CD8-positive, alpha-beta T cell (primary cell): ENCODE measurements at regions of chr9 and their contacts with region 1.

Region 1: DNA sequence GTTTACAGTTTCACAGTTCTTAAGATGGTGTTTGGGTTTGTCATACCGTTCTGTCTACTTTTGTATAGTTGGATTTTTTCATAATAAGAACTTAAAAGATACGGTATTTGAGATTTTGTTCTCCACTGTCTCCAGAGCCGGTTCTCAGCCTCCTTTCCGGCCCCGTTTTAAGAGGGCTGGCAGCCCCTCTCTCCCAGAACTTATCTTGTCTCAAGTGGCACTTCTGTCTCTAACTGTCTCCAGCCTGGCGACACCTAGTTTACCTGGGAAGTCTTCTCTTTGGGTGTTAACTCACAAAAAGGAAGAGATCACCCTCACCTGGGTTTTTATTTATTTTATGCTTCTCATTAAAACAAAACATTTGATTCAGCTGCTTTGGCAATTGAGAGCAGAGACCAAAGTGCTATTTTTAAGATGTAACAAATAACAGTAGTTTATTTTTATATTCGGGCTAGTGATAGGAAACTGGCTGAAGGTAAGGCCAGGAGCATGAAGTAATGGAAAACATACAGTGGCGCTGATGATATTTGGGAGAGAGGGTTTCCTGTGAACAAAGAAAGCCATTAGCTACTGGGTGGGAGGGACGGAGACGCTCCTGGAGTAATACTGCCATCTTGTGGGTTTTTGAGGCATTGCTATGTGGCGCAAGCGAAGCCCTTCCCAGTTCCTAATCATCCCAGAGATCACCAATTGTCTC is 48.3 kb downstream of the ACER2 start:
- DNase-seq: peak; percentile 10 to 81 (median 59)
- ATAC-seq: peak; percentile 96
- H3K4me3 ChIP-seq: no peak overlapping the region
- H3K4me3 Mint-ChIP-seq: peak overlapping the region; percentile 24
- H3K27ac ChIP-seq: no peak overlapping the region
- H3K27ac Mint-ChIP-seq: no peak overlapping the region
- H3K4me1 ChIP-seq: peaks cover 7% of the 10 kb centered on the region
- H3K4me1 Mint-ChIP-seq: peaks cover 5% of the 10 kb centered on the region
- H3K27me3 ChIP-seq: no peaks in the 10 kb centered on the region
- H3K27me3 Mint-ChIP-seq: peaks cover 5% of the 10 kb centered on the region
- CTCF ChIP-seq: peak; percentile 89

Region 2: GRCh38 chr9:18905028-18905882 is 551.9 kb before region 1 on chr9:
- CTCF ChIA-PET with region 1: no interaction called
- POLR2A ChIA-PET with region 1: no interaction called
- intact Hi-C with region 1: no loop called
- DNase-seq: no peak
- ATAC-seq: no peak
- H3K4me3 ChIP-seq: no peak overlapping the region
- H3K4me3 Mint-ChIP-seq: no peak overlapping the region
- H3K27ac ChIP-seq: no peak overlapping the region
- H3K27ac Mint-ChIP-seq: no peak overlapping the region
- H3K4me1 ChIP-seq: no peaks in the 10 kb centered on the region
- H3K4me1 Mint-ChIP-seq: no peaks in the 10 kb centered on the region
- H3K27me3 ChIP-seq: no peaks in the 10 kb centered on the region
- H3K27me3 Mint-ChIP-seq: peaks cover 8% of the 10 kb centered on the region
- CTCF ChIP-seq: no peak

Region 3: GRCh38 chr9:19085295-19085694 is 371.8 kb before region 1 on chr9:
- CTCF ChIA-PET with region 1: interaction called, 4 read pairs
- POLR2A ChIA-PET with region 1: no interaction called
- intact Hi-C with region 1: loop called (anchors 1 to 2 kb)
- DNase-seq: peak in 2 of 9 experiments; percentile 51 to 66
- ATAC-seq: peak; percentile 71
- H3K4me3 ChIP-seq: no peak overlapping the region
- H3K4me3 Mint-ChIP-seq: no peak overlapping the region
- H3K27ac ChIP-seq: no peak overlapping the region
- H3K27ac Mint-ChIP-seq: no peak overlapping the region
- H3K4me1 ChIP-seq: no peaks in the 10 kb centered on the region
- H3K4me1 Mint-ChIP-seq: peaks cover 3% of the 10 kb centered on the region
- H3K27me3 ChIP-seq: no peaks in the 10 kb centered on the region
- H3K27me3 Mint-ChIP-seq: no peaks in the 10 kb centered on the region
- CTCF ChIP-seq: peak; percentile 56

Region 4: DNA sequence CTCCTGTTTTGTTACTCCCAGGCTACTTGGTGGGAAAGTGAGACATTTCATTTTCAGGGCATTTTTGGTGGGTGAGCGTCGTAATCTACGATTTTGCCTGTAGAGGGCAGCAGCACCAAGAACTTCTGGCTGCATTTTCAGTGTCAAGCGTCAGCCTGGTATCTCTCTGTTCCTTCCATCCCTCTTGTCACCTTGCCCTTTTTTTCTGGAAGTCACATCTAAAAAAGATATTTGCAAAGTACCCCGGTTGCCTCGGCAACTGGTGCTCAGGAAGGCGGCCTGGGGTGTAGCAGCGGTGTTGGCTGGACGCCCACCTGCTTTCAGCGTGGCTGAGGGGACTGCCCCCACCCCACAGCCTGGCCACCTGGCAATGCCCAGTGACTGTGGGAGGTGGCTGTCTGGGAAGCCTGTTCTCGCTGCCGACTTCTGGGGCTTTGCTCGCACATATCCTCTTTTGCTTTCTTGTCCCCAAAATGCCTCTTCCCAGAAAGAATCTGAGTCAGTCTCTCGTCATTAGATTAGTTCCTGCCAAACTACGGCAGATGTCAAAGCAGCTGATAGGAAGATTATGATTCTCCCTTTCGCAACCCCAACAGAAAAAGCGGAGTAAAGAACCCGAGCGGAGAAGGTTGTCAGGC is 36.1 kb after region 1 on chr9:
- CTCF ChIA-PET with region 1: no interaction called
- POLR2A ChIA-PET with region 1: no interaction called
- intact Hi-C with region 1: no loop called
- DNase-seq: peak in 6 of 9 experiments; percentile 10 to 60 (median 42)
- ATAC-seq: peak; percentile 63
- H3K4me3 ChIP-seq: no peak overlapping the region
- H3K4me3 Mint-ChIP-seq: peak overlapping the region; percentile 40
- H3K27ac ChIP-seq: no peak overlapping the region
- H3K27ac Mint-ChIP-seq: no peak overlapping the region
- H3K4me1 ChIP-seq: no peaks in the 10 kb centered on the region
- H3K4me1 Mint-ChIP-seq: peaks cover 9% of the 10 kb centered on the region
- H3K27me3 ChIP-seq: no peaks in the 10 kb centered on the region
- H3K27me3 Mint-ChIP-seq: peaks cover 15% of the 10 kb centered on the region
- CTCF ChIP-seq: peak; percentile 76

Region 5: GRCh38 chr9:19513671-19514275 is 56.6 kb after region 1 on chr9:
- CTCF ChIA-PET with region 1: no interaction called
- POLR2A ChIA-PET with region 1: no interaction called
- intact Hi-C with region 1: no loop called
- DNase-seq: no peak
- ATAC-seq: no peak
- H3K4me3 ChIP-seq: no peak overlapping the region
- H3K4me3 Mint-ChIP-seq: no peak overlapping the region
- H3K27ac ChIP-seq: no peak overlapping the region
- H3K27ac Mint-ChIP-seq: no peak overlapping the region
- H3K4me1 ChIP-seq: no peaks in the 10 kb centered on the region
- H3K4me1 Mint-ChIP-seq: no peaks in the 10 kb centered on the region
- H3K27me3 ChIP-seq: no peaks in the 10 kb centered on the region
- H3K27me3 Mint-ChIP-seq: peaks cover 9% of the 10 kb centered on the region
- CTCF ChIP-seq: no peak